Dorsolateral prefrontal cortex (tissue), 120 donors: ENCODE measurements at regions of chr10 and their contacts with region 1.

Region 1: DNA sequence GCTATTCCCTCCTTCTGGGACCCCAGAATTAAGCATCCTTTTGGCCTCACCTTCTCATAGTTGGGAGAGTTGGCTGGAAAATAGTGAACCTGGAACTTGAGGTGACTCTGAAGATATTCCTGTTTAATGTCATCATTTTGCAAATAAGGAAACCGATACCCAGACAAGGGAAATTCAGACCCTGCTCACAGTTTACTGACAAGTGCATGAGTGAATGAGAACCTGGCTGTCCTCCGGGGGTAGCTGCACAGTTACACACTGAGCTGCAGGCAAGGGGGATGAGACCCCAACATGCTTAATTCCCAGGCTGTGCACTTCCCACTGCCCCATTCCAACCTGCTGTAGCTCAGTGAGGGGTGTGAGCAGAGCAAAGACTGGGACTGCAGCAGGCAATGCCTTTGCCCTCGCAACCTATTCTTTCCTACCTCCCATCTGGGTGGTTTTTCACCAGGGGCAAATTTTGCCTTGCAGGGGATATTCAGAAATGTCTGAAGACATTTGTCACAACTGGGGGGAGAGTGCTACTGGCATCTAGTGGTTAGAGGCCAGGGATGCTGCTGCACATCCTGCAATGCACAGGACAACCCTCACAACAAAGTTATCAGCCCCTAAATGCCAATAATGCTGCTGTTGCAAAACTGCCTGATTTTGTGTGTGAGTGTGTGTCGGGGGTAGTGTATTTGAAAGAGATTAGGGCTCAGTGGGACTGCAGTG is 136.2 kb downstream of the SORCS3 start:
- DNase-seq: peak in 1 of 10 donors; percentile 23
- H3K4me3 ChIP-seq: no peak overlapping the region
- H3K27ac ChIP-seq: no peak overlapping the region
- H3K27me3 ChIP-seq: peaks cover 0 to 11% (median 0%) of the 10 kb centered on the region in 45 donors
- CTCF ChIP-seq: peak in 50 of 56 donors; percentile 16 to 71 (median 43)

Region 2: GRCh38 chr10:104650072-104650471 is 127.2 kb before region 1 on chr10:
- intact Hi-C with region 1: loop called (anchors 1 to 5 kb)
- DNase-seq: no peak
- H3K4me3 ChIP-seq: no peak overlapping the region
- H3K27ac ChIP-seq: no peak overlapping the region
- H3K27me3 ChIP-seq: no peaks in the 10 kb centered on the region
- CTCF ChIP-seq: peak; percentile 36 to 79 (median 62)